GM12878 (cell line): ENCODE measurements at regions of chr14 and their contacts with region 1.

Region 1: GRCh38 chr14:92352158-92352985 is 29.4 kb downstream of the SLC24A4 start:
- DNase-seq: no peak
- ATAC-seq: peak; percentile 77
- H3K4me3 ChIP-seq: no peak overlapping the region
- H3K27ac ChIP-seq: no peak overlapping the region
- H3K4me1 ChIP-seq: no peaks in the 10 kb centered on the region; the same call in 1 of the 2 replicates
- H3K27me3 ChIP-seq: peaks cover 0 to 3% of the 10 kb centered on the region in 2 experiments; a peak in 1 of 4 replicates
- CTCF ChIP-seq: peak; percentile 49 to 58 (median 55); a peak in 5 of 6 replicates
- EP300 ChIP-seq: no peak
- POLR2A ChIP-seq: no peak
- RAD21 ChIP-seq: peak; percentile 64

Region 2: GRCh38 chr14:92093320-92093719 is 259.1 kb before region 1 on chr14:
- CTCF ChIA-PET with region 1: interaction called, 11 read pairs
- POLR2A ChIA-PET with region 1: no interaction called
- RAD21 ChIA-PET with region 1: interaction called, 4 read pairs
- SMC1A ChIA-PET with region 1: interaction called, 9 read pairs
- in situ Hi-C with region 1: no loop called
- intact Hi-C with region 1: no loop called
- DNase-seq: no peak
- ATAC-seq: peak; percentile 79
- H3K4me3 ChIP-seq: no peak overlapping the region
- H3K27ac ChIP-seq: no peak overlapping the region
- H3K4me1 ChIP-seq: no peaks in the 10 kb centered on the region
- H3K27me3 ChIP-seq: no peaks in the 10 kb centered on the region
- CTCF ChIP-seq: peak in 2 of 3 experiments; percentile 31 to 54; a peak in 3 of 6 replicates
- EP300 ChIP-seq: no peak
- POLR2A ChIP-seq: no peak
- RAD21 ChIP-seq: peak; percentile 40

Region 3: DNA sequence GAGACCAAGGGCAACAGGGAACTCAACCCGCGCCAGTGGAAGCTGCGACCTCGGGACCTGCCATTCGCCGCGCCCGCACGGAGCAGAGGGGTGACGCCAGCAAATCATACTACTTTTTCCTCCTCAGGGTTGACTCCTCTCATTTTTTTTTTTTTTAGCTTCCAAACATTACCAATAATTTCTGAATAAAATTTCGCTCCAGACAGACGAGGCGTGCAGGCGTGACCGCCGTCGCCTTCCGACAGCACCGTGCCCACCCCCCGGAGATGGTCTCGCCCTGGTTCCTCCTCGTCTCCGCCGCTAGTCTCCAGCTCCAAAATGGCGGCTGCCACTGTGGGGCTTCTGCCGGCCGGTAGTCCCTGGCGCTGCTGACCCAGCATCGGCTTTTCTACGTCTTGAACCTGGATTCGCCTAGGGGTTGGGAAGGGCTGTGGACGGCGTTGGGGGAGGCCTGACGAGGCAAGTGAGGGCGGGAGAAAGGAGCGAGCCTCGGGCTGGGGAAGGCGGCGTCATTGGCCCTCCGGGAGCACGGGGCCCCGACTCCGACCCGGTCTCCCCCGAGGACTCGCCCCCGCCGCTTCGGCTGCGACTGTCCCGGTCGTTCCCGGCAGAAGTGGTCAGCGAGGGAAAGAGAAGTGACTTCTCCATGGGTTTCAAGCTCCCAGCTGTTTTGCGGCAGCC is 230.6 kb before region 1 on chr14 and contains the starts of genes CPSF2 and NDUFB1:
- CTCF ChIA-PET with region 1: interaction called, 11 read pairs
- POLR2A ChIA-PET with region 1: no interaction called
- RAD21 ChIA-PET with region 1: interaction called, 5 read pairs
- SMC1A ChIA-PET with region 1: interaction called, 4 read pairs
- in situ Hi-C with region 1: no loop called
- intact Hi-C with region 1: no loop called
- DNase-seq: peak; percentile 45
- ATAC-seq: peak; percentile 93
- H3K4me3 ChIP-seq: peak within 1 kb of the TSS; percentile 96
- H3K27ac ChIP-seq: peak within 1 kb of the TSS; percentile 95
- H3K4me1 ChIP-seq: peaks cover 6% of the 10 kb centered on the region; the same call in 1 of the 2 replicates
- H3K27me3 ChIP-seq: no peaks in the 10 kb centered on the region
- CTCF ChIP-seq: no peak
- EP300 ChIP-seq: no peak
- POLR2A ChIP-seq: peak; percentile 98
- RAD21 ChIP-seq: no peak
- polyA plus RNA-seq, gene CPSF2: 18.2 to 20.1 TPM
- polyA plus RNA-seq, gene NDUFB1: 626 to 780 TPM

Region 4: GRCh38 chr14:92144708-92145107 is 207.7 kb before region 1 on chr14:
- CTCF ChIA-PET with region 1: interaction called, 77 read pairs
- POLR2A ChIA-PET with region 1: no interaction called
- RAD21 ChIA-PET with region 1: no interaction called
- SMC1A ChIA-PET with region 1: interaction called, 10 read pairs
- in situ Hi-C with region 1: no loop called
- intact Hi-C with region 1: loop called (anchors 5 kb)
- DNase-seq: no peak
- ATAC-seq: no peak
- H3K4me3 ChIP-seq: no peak overlapping the region
- H3K27ac ChIP-seq: no peak overlapping the region
- H3K4me1 ChIP-seq: no peaks in the 10 kb centered on the region
- H3K27me3 ChIP-seq: no peaks in the 10 kb centered on the region
- CTCF ChIP-seq: no peak
- EP300 ChIP-seq: no peak
- POLR2A ChIP-seq: no peak
- RAD21 ChIP-seq: no peak

Region 5: DNA sequence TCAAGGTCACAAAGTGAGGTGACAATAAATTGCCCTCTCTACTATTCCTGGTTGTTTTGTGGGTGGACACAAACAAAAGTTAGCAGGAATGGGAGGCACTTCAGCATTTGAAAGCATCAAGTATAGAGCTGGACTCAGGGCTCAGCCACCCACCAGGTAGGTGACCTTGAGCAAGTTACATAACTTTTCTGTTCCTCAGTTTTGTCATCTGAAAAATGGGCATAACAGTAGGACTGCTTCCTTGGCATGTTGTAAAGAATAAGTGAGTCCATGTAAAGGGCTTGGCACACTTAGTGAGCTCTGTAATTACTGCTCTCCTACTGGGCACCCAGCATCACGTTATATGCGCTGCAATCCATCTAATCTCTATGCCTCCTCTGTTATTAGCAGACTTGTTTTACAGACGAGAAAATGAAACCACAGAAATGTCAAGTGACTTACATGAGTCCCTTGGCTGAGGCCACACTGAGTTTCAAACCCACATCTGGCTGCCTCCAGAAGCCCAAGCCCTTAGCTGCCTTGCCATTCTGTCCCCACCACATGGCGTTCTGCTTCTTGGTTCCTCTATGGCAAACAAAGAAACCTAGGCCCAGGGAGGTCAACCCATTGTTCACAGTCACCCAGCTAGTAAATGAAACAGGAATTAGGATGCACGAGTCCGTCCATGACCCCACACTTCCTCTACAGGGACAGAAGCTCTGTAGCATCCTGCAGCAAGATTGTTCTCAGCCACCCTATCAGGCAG is 92.6 kb before region 1 on chr14:
- CTCF ChIA-PET with region 1: interaction called, 5 read pairs
- POLR2A ChIA-PET with region 1: interaction called, 6 read pairs
- RAD21 ChIA-PET with region 1: interaction called, 11 read pairs
- SMC1A ChIA-PET with region 1: interaction called, 4 read pairs
- in situ Hi-C with region 1: no loop called
- intact Hi-C with region 1: no loop called
- DNase-seq: peak; percentile 95
- ATAC-seq: peak; percentile 87
- H3K4me3 ChIP-seq: peak overlapping the region; percentile 20; the same call in 1 of the 2 replicates
- H3K27ac ChIP-seq: peak overlapping the region; percentile 87
- H3K4me1 ChIP-seq: peaks cover 34% of the 10 kb centered on the region
- H3K27me3 ChIP-seq: no peaks in the 10 kb centered on the region; a peak in 1 of 4 replicates
- CTCF ChIP-seq: peak in 1 of 3 experiments; percentile 13; a peak in 1 of 6 replicates
- EP300 ChIP-seq: peak; percentile 52 to 79; a peak in 3 of 4 replicates
- POLR2A ChIP-seq: 0 out of 2 replicates have a peak, but pooled peaks have one; percentile 22
- RAD21 ChIP-seq: 0 out of 2 replicates have a peak, but pooled peaks have one; percentile 10

Region 6: DNA sequence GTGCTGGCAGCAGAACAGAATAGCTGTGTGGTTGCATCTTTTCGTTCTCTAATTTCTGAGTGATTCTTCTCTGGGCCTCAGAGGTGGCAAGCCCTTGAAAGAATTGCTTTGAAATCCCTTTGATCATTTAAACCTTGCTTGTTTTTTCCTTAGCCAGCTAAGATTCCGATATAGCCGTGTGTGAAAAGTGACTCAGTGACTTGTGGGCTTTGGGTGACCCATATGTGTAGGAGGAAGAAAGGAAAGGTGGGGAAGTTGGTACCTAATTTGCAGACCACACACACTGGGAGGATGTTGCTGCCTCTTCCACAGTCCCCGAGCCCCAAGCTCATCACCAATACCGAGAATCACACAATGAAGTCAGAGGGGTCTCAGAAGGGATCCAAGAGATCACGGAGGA is 10.6 kb before region 1 on chr14:
- CTCF ChIA-PET with region 1: interaction called, 17 read pairs
- POLR2A ChIA-PET with region 1: no interaction called
- RAD21 ChIA-PET with region 1: interaction called, 10 read pairs
- SMC1A ChIA-PET with region 1: interaction called, 9 read pairs
- in situ Hi-C with region 1: no loop called
- intact Hi-C with region 1: no loop called
- DNase-seq: no peak
- ATAC-seq: peak; percentile 43
- H3K4me3 ChIP-seq: no peak overlapping the region
- H3K27ac ChIP-seq: no peak overlapping the region
- H3K4me1 ChIP-seq: no peaks in the 10 kb centered on the region
- H3K27me3 ChIP-seq: peaks cover 2 to 3% of the 10 kb centered on the region in 2 experiments; a peak in 2 of 4 replicates
- CTCF ChIP-seq: no peak
- EP300 ChIP-seq: no peak
- POLR2A ChIP-seq: no peak
- RAD21 ChIP-seq: no peak